ENCODE measurements at regions of chr14 and their contacts with region 1.

Region 1: GRCh38 chr14:44912041-44912869 is 49.5 kb downstream of the KLHL28 start:
- DNase-seq: no peak
- H3K4me3 ChIP-seq: peak overlapping the region; percentile 36
- H3K27ac ChIP-seq: no peak overlapping the region
- H3K4me1 ChIP-seq: no peaks in the 10 kb centered on the region
- H3K27me3 ChIP-seq: peaks cover 9% of the 10 kb centered on the region
- CTCF ChIP-seq: no peak

Region 2: GRCh38 chr14:45134051-45134958 is 222.1 kb after region 1 on chr14 and contains the start of gene FKBP3:
- intact Hi-C with region 1: loop called (anchors 10 kb)
- DNase-seq: peak; percentile 97
- H3K4me3 ChIP-seq: peak within 1 kb of the TSS; percentile 60
- H3K27ac ChIP-seq: peak within 1 kb of the TSS; percentile 80
- H3K4me1 ChIP-seq: peaks cover 10% of the 10 kb centered on the region
- H3K27me3 ChIP-seq: no peaks in the 10 kb centered on the region
- CTCF ChIP-seq: no peak
- total RNA-seq, gene FKBP3: 44.6 to 58.8 TPM

Region 3: DNA sequence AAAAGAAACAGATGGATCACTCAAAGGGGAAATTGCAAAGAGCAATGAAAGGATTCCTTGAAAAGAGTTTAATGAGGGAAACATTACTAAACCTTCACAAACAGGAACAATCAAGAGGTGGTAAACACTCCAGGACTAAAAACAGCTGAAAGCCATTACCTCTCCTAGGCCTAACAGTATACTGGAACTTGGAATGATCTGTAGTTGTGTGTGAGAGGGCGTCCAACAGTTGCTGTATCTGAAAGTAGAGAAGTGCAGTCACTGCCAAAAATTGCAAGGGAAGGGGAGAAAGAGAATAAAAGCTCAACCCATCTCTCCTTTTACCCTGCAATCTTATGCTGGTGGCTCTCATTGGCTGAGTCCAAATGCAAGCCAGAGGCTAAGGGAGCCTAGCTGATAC is 357.8 kb after region 1 on chr14:
- intact Hi-C with region 1: loop called (anchors 2 kb)
- DNase-seq: no peak
- H3K4me3 ChIP-seq: no peak overlapping the region
- H3K27ac ChIP-seq: no peak overlapping the region
- H3K4me1 ChIP-seq: no peaks in the 10 kb centered on the region
- H3K27me3 ChIP-seq: no peaks in the 10 kb centered on the region
- CTCF ChIP-seq: no peak